ENCODE measurements at regions of chr4 and their contacts with region 1.

Region 1: GRCh38 chr4:74444891-74445642 is at the start of gene AREG:
- DNase-seq: peak; percentile 68
- ATAC-seq: peak; percentile 71
- H3K4me3 ChIP-seq: peak within 1 kb of the TSS; percentile 76
- H3K27ac ChIP-seq: peak within 1 kb of the TSS; percentile 81
- H3K4me1 ChIP-seq: peaks cover 49% of the 10 kb centered on the region
- H3K27me3 ChIP-seq: no peaks in the 10 kb centered on the region
- CTCF ChIP-seq: peak; percentile 56
- total RNA-seq, gene AREG: 203 and 222 TPM in 2 replicates

Region 2: GRCh38 chr4:74320559-74321118 is 124.4 kb before region 1 on chr4:
- CTCF ChIA-PET with region 1: no interaction called
- POLR2A ChIA-PET with region 1: no interaction called
- intact Hi-C with region 1: loop called (anchors 1 kb)
- DNase-seq: peak; percentile 95
- ATAC-seq: peak; percentile 90
- H3K4me3 ChIP-seq: peak overlapping the region; percentile 15; the same call in 1 of the 2 replicates
- H3K27ac ChIP-seq: peak overlapping the region; percentile 95
- H3K4me1 ChIP-seq: peaks cover 28% of the 10 kb centered on the region
- H3K27me3 ChIP-seq: no peaks in the 10 kb centered on the region
- CTCF ChIP-seq: peak; percentile 78

Region 3: GRCh38 chr4:74329307-74329706 is 115.8 kb before region 1 on chr4:
- CTCF ChIA-PET with region 1: no interaction called
- POLR2A ChIA-PET with region 1: interaction called, 15 read pairs
- intact Hi-C with region 1: no loop called
- DNase-seq: no peak
- ATAC-seq: no peak
- H3K4me3 ChIP-seq: no peak overlapping the region
- H3K27ac ChIP-seq: peak overlapping the region; percentile 99
- H3K4me1 ChIP-seq: peaks cover 43% of the 10 kb centered on the region
- H3K27me3 ChIP-seq: no peaks in the 10 kb centered on the region
- CTCF ChIP-seq: no peak

Region 4: GRCh38 chr4:74376888-74377483 is 68.1 kb before region 1 on chr4:
- CTCF ChIA-PET with region 1: no interaction called
- POLR2A ChIA-PET with region 1: interaction called, 7 read pairs
- intact Hi-C with region 1: loop called (anchors 1 kb)
- DNase-seq: peak; percentile 60
- ATAC-seq: peak; percentile 14; the same call in 1 of the 2 replicates
- H3K4me3 ChIP-seq: peak overlapping the region; percentile 56
- H3K27ac ChIP-seq: peak overlapping the region; percentile 100
- H3K4me1 ChIP-seq: peaks cover 40% of the 10 kb centered on the region
- H3K27me3 ChIP-seq: no peaks in the 10 kb centered on the region
- CTCF ChIP-seq: peak; percentile 71

Region 5: DNA sequence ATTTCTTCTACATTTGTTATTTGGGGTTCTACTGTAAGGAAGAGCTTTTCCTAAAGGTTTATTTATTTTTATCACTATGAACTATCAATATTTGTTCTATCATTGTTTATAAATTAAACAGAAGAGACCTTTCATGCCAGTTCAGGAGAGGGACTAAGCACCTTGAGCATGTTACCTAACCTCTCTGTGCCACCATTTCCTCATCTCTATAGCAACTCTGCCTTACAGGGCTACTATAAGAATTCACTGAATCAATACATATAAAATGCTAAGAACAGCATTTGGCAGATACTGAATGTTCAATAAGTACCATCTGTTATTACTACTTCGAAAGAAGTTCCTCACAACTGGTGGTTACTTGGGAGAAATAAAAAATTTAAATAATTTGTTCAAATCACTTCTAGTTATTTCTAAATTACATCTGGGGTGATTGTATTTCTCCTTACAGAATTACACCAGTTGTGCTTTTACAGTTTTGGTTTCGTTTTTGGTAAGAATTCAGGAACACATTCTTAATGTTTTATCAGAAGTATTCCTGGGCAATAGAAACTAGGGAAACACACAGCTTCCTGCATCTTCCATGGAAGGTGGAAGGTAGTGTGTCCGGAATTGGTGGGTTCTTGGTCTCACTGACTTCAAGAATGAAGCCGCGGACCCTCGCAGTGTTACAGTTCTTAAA is 47.2 kb before region 1 on chr4:
- CTCF ChIA-PET with region 1: no interaction called
- POLR2A ChIA-PET with region 1: interaction called, 4 read pairs
- intact Hi-C with region 1: loop called (anchors 5 kb)
- DNase-seq: peak; percentile 23
- ATAC-seq: peak; percentile 43
- H3K4me3 ChIP-seq: peak overlapping the region; percentile 70
- H3K27ac ChIP-seq: peak overlapping the region; percentile 33
- H3K4me1 ChIP-seq: peaks cover 29% of the 10 kb centered on the region
- H3K27me3 ChIP-seq: no peaks in the 10 kb centered on the region
- CTCF ChIP-seq: no peak

Region 6: GRCh38 chr4:74516321-74516720 is 71.3 kb after region 1 on chr4:
- CTCF ChIA-PET with region 1: no interaction called
- POLR2A ChIA-PET with region 1: no interaction called
- intact Hi-C with region 1: no loop called
- DNase-seq: no peak
- ATAC-seq: no peak; the same call in 1 of the 2 replicates
- H3K4me3 ChIP-seq: no peak overlapping the region
- H3K27ac ChIP-seq: no peak overlapping the region
- H3K4me1 ChIP-seq: no peaks in the 10 kb centered on the region
- H3K27me3 ChIP-seq: no peaks in the 10 kb centered on the region
- CTCF ChIP-seq: no peak